Endothelial cell of umbilical vein (primary cell): ENCODE measurements at regions of chr2 and their contacts with region 1.

Region 1: GRCh38 chr2:45650851-45651414 is 542 bp upstream of the PRKCE start:
- DNase-seq: peak; percentile 96
- H3K4me3 ChIP-seq: peak overlapping the region; percentile 81 to 98 (median 88)
- H3K27ac ChIP-seq: peak overlapping the region; percentile 76
- H3K4me1 ChIP-seq: peaks cover 16% of the 10 kb centered on the region
- H3K27me3 ChIP-seq: no peaks in the 10 kb centered on the region
- CTCF ChIP-seq: peak; percentile 35 to 49
- POLR2A ChIP-seq: peak; percentile 86

Region 2: GRCh38 chr2:45669032-45669486 is 18.1 kb after region 1 on chr2:
- CTCF ChIA-PET with region 1: interaction called, 3 read pairs
- POLR2A ChIA-PET with region 1: interaction called, 3 read pairs
- dilution Hi-C with region 1: no loop called
- intact Hi-C with region 1: loop called (anchors 1 kb)
- DNase-seq: peak; percentile 96
- H3K4me3 ChIP-seq: peak overlapping the region in 1 of 3 experiments; percentile 46
- H3K27ac ChIP-seq: peak overlapping the region; percentile 93
- H3K4me1 ChIP-seq: peaks cover 16% of the 10 kb centered on the region
- H3K27me3 ChIP-seq: no peaks in the 10 kb centered on the region
- CTCF ChIP-seq: no peak
- POLR2A ChIP-seq: peak; percentile 80

Region 3: GRCh38 chr2:45794134-45794617 is 143.2 kb after region 1 on chr2:
- CTCF ChIA-PET with region 1: interaction called, 3 read pairs
- POLR2A ChIA-PET with region 1: no interaction called
- dilution Hi-C with region 1: no loop called
- intact Hi-C with region 1: loop called (anchors 1 kb)
- DNase-seq: peak; percentile 61
- H3K4me3 ChIP-seq: peak overlapping the region in 1 of 3 experiments; percentile 20
- H3K27ac ChIP-seq: peak overlapping the region; percentile 41
- H3K4me1 ChIP-seq: peaks cover 43% of the 10 kb centered on the region
- H3K27me3 ChIP-seq: no peaks in the 10 kb centered on the region
- CTCF ChIP-seq: no peak
- POLR2A ChIP-seq: no peak

Region 4: GRCh38 chr2:46461011-46461674 is 810.2 kb after region 1 on chr2:
- CTCF ChIA-PET with region 1: no interaction called
- POLR2A ChIA-PET with region 1: no interaction called
- dilution Hi-C with region 1: no loop called
- intact Hi-C with region 1: loop called (anchors 2 kb)
- DNase-seq: peak; percentile 72
- H3K4me3 ChIP-seq: no peak overlapping the region
- H3K27ac ChIP-seq: no peak overlapping the region
- H3K4me1 ChIP-seq: no peaks in the 10 kb centered on the region
- H3K27me3 ChIP-seq: no peaks in the 10 kb centered on the region
- CTCF ChIP-seq: peak; percentile 93
- POLR2A ChIP-seq: no peak

Region 5: DNA sequence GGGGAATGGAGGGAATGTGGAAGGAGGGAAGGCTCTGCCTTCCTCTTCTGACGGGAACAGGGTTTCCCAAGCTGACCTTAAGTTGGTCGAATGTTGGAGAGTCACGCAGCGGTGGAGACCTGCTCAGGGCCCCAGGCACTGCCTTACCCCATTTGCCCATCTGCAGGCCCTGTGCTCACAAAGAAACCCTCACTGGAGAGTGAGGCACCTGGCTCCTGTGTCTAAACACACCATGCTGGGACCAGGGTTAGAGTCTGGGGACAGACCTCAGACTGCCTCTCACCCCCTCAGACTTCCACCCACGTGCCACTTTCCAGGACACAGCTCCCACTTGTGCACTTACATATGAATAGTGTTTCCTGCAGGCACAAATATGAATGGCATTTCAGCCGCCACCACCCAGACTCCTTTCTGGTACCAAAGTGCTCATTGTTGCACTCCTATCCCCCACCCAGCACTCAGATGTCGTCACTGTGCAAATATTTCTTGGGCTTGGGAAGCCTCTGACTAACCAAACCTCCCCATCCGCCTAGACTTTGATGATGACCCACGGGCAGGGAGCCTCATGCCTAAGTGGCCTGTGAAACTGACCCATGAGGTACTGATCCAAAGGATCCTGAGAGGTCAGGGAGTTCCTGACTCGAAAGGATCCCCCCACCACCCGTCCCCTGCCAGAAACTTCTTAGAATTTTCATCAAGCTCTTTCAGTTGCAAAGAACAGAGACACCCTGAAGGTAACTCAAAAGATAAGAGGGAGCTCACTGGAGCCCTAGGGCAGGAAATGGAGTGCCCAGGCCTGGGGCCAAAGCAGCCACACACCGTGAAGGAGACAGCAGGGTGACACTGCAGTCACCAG is 1425.9 kb after region 1 on chr2:
- CTCF ChIA-PET with region 1: no interaction called
- POLR2A ChIA-PET with region 1: no interaction called
- dilution Hi-C with region 1: no loop called
- intact Hi-C with region 1: no loop called
- DNase-seq: peak; percentile 76
- H3K4me3 ChIP-seq: no peak overlapping the region
- H3K27ac ChIP-seq: peak overlapping the region; percentile 89
- H3K4me1 ChIP-seq: peaks cover 26% of the 10 kb centered on the region
- H3K27me3 ChIP-seq: no peaks in the 10 kb centered on the region
- CTCF ChIP-seq: no peak
- POLR2A ChIP-seq: no peak